Naive thymus-derived CD4-positive, alpha-beta T cell (primary cell): ENCODE measurements at regions of chr2 and their contacts with region 1.

Region 1: GRCh38 chr2:172465417-172466334 is 38.3 kb downstream of the ITGA6 start:
- DNase-seq: peak in 8 of 9 donors; percentile 58 to 83 (median 76)
- ATAC-seq: peak; percentile 65
- H3K4me3 ChIP-seq: peak overlapping the region; percentile 68
- H3K4me3 Mint-ChIP-seq: peak overlapping the region; percentile 21 to 93 (median 84)
- H3K27ac ChIP-seq: peak overlapping the region; percentile 69
- H3K27ac Mint-ChIP-seq: peak overlapping the region; percentile 34 to 98 (median 91)
- H3K4me1 ChIP-seq: peaks cover 50 to 54% of the 10 kb centered on the region in 2 donors
- H3K4me1 Mint-ChIP-seq: peaks cover 54 to 97% (median 84%) of the 10 kb centered on the region in 7 donors
- H3K27me3 ChIP-seq: no peaks in the 10 kb centered on the region
- H3K27me3 Mint-ChIP-seq: peaks cover 0 to 2% (median 0%) of the 10 kb centered on the region in 5 donors

Region 2: DNA sequence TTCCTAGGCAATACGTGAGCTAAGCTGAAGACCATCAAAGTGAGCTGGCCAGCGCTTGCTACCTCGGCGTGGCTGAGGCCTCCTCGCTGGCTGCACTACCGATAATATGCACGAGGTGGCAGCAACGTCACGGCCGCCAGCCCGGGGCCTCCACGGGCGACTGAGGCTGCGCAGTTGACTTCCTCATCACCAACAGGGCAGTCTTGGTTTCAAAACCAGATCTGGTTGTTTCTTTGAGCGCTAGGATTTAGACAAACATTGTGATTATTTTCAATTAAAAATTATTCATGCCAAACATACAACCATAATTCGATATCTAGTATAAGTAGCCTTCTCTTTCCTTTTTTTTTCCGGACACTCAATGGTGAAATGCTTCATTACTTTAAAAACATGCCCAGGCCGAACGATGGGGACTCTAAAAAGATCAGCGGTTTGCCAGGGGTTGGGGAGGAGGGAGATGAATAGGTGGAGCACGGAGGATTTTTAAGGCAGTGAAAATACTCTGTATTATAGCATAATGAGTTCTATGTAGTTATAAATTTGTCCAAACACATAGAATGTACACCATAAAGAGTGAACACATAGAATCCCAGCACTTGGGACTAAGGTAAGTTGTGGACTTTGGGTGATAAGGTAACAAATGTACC is 891.4 kb before region 1 on chr2:
- CTCF ChIA-PET with region 1: no interaction called
- POLR2A ChIA-PET with region 1: no interaction called
- intact Hi-C with region 1: loop called (anchors 1 to 5 kb)
- DNase-seq: peak; percentile 50 to 84 (median 73)
- ATAC-seq: peak; percentile 99
- H3K4me3 ChIP-seq: no peak overlapping the region
- H3K4me3 Mint-ChIP-seq: peak overlapping the region in 6 of 10 donors; percentile 13 to 69 (median 16)
- H3K27ac ChIP-seq: no peak overlapping the region
- H3K27ac Mint-ChIP-seq: peak overlapping the region in 2 of 9 donors; percentile 31 to 60
- H3K4me1 ChIP-seq: peaks cover 0 to 3% of the 10 kb centered on the region in 2 donors
- H3K4me1 Mint-ChIP-seq: peaks cover 0 to 7% (median 6%) of the 10 kb centered on the region in 7 donors
- H3K27me3 ChIP-seq: no peaks in the 10 kb centered on the region
- H3K27me3 Mint-ChIP-seq: peaks cover 0 to 8% (median 0%) of the 10 kb centered on the region in 5 donors

Region 3: GRCh38 chr2:171922230-171923022 is 543.2 kb before region 1 on chr2 and contains the start of gene HAT1:
- CTCF ChIA-PET with region 1: no interaction called
- POLR2A ChIA-PET with region 1: interaction called, 4 read pairs
- intact Hi-C with region 1: loop called in 1 of 2 experiments (anchors 1 kb)
- DNase-seq: peak; percentile 92 to 98 (median 97)
- ATAC-seq: peak; percentile 99
- H3K4me3 ChIP-seq: peak within 1 kb of the TSS; percentile 75
- H3K4me3 Mint-ChIP-seq: peak within 1 kb of the TSS; percentile 90 to 100 (median 99)
- H3K27ac ChIP-seq: peak within 1 kb of the TSS; percentile 93
- H3K27ac Mint-ChIP-seq: peak within 1 kb of the TSS; percentile 96 to 100 (median 99)
- H3K4me1 ChIP-seq: peaks cover 13 to 17% of the 10 kb centered on the region in 2 donors
- H3K4me1 Mint-ChIP-seq: peaks cover 20 to 50% (median 42%) of the 10 kb centered on the region in 7 donors
- H3K27me3 ChIP-seq: no peaks in the 10 kb centered on the region
- H3K27me3 Mint-ChIP-seq: no peaks in the 10 kb centered on the region
- total RNA-seq, gene HAT1: 22.1 to 55.4 (median 26.4) TPM

Region 4: GRCh38 chr2:172131713-172132555 is 333.7 kb before region 1 on chr2:
- CTCF ChIA-PET with region 1: no interaction called
- POLR2A ChIA-PET with region 1: interaction called, 4 read pairs
- intact Hi-C with region 1: loop called in 1 of 2 experiments (anchors 2 kb)
- DNase-seq: no peak
- ATAC-seq: no peak
- H3K4me3 ChIP-seq: no peak overlapping the region
- H3K4me3 Mint-ChIP-seq: no peak overlapping the region
- H3K27ac ChIP-seq: no peak overlapping the region
- H3K27ac Mint-ChIP-seq: no peak overlapping the region
- H3K4me1 ChIP-seq: no peaks in the 10 kb centered on the region
- H3K4me1 Mint-ChIP-seq: no peaks in the 10 kb centered on the region
- H3K27me3 ChIP-seq: no peaks in the 10 kb centered on the region
- H3K27me3 Mint-ChIP-seq: peaks cover 0 to 34% (median 7%) of the 10 kb centered on the region in 5 donors

Region 5: DNA sequence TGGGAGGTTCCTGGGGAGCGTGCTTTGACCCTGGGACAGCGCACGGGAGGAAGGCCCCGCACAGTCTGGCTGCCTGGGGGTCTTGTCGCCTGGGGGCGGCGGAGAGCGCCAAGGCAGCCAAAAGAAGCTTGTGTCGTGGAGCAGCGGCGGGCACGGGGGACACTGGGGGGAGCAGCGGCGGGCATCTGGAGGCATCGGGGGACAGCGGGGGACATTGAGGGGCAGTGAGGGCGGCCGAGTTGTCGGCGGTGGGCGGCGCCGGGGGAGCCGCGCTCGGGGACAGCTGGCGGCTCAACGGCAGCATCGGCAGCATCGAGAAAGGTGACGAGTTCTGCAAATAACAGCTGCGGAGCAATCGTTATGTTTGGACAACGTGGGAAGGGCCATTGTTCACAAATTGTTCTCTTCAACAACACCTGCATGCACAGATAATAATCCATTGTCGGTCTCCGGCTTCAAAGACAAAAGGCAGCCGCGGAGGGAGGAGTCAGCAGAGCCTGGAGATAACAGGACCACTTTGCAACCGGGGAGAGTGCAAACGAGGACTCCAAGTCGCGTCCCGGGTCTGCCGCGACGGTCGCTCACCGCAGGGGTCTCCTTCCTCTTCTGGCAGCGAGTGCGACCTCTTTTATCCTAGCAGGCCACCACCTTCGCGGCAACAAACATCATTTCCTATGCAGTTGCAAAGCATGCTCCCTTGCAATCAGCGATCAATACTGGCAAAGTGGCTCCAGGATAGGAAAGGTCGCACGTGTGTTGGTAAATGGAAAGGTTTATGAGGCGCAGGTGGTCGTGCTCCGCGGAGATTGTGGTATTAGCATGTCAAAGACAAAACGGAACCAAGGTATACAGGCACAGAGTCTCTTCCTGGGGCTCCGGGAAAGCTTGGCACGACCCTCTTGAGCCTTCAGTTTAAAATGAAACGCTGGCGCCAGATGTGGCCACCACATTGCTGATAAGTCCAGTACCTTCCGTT is 230.7 kb before region 1 on chr2:
- CTCF ChIA-PET with region 1: interaction called, 3 read pairs
- POLR2A ChIA-PET with region 1: interaction called, 3 read pairs
- intact Hi-C with region 1: loop called in 1 of 2 experiments (anchors 1 kb)
- DNase-seq: peak in 7 of 9 donors; percentile 18 to 51 (median 38)
- ATAC-seq: peak; percentile 68
- H3K4me3 ChIP-seq: peak overlapping the region; percentile 71
- H3K4me3 Mint-ChIP-seq: peak overlapping the region; percentile 82 to 97 (median 92)
- H3K27ac ChIP-seq: no peak overlapping the region
- H3K27ac Mint-ChIP-seq: peak overlapping the region in 6 of 9 donors; percentile 11 to 88 (median 60)
- H3K4me1 ChIP-seq: peaks cover 0 to 15% of the 10 kb centered on the region in 2 donors
- H3K4me1 Mint-ChIP-seq: peaks cover 14 to 25% (median 20%) of the 10 kb centered on the region in 7 donors
- H3K27me3 ChIP-seq: peaks cover 4 to 13% of the 10 kb centered on the region in 2 donors
- H3K27me3 Mint-ChIP-seq: peaks cover 4 to 72% (median 21%) of the 10 kb centered on the region in 5 donors

Region 6: DNA sequence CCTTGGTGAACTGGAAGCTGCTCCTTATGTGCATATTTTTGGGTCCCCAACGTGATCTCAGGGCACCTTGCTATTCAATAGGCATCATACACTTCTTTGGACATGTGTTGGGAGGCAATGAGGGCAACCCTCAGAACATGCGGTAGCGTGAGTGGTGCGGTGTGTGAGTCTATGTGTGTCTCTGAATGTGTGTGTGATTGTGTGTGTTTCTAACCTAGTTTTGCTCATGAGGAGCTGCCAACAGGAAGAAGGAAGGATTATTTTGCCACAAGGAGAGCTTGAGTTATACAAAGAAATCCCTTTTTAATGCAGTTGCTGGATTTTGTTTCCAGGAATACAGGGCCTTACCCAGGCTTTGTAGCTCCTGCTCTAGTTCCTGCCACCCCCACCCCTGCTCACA is 114.1 kb before region 1 on chr2:
- CTCF ChIA-PET with region 1: no interaction called
- POLR2A ChIA-PET with region 1: no interaction called
- intact Hi-C with region 1: no loop called
- DNase-seq: no peak
- ATAC-seq: no peak
- H3K4me3 ChIP-seq: no peak overlapping the region
- H3K4me3 Mint-ChIP-seq: no peak overlapping the region
- H3K27ac ChIP-seq: no peak overlapping the region
- H3K27ac Mint-ChIP-seq: peak overlapping the region in 1 of 9 donors; percentile 32
- H3K4me1 ChIP-seq: no peaks in the 10 kb centered on the region
- H3K4me1 Mint-ChIP-seq: peaks cover 0 to 1% (median 0%) of the 10 kb centered on the region in 7 donors
- H3K27me3 ChIP-seq: no peaks in the 10 kb centered on the region
- H3K27me3 Mint-ChIP-seq: peaks cover 0 to 14% (median 0%) of the 10 kb centered on the region in 5 donors

Region 7: GRCh38 chr2:172449911-172450550 is 15.6 kb before region 1 on chr2:
- CTCF ChIA-PET with region 1: interaction called, 673 read pairs
- POLR2A ChIA-PET with region 1: interaction called, 862 read pairs
- intact Hi-C with region 1: loop called in 1 of 2 experiments (anchors 1 kb)
- DNase-seq: peak in 1 of 9 donors; percentile 32
- ATAC-seq: peak; percentile 77
- H3K4me3 ChIP-seq: no peak overlapping the region
- H3K4me3 Mint-ChIP-seq: peak overlapping the region in 9 of 10 donors; percentile 57 to 82 (median 69)
- H3K27ac ChIP-seq: peak overlapping the region; percentile 10
- H3K27ac Mint-ChIP-seq: peak overlapping the region in 8 of 9 donors; percentile 5 to 90 (median 77)
- H3K4me1 ChIP-seq: peaks cover 6 to 75% of the 10 kb centered on the region in 2 donors
- H3K4me1 Mint-ChIP-seq: peaks cover 27 to 90% (median 83%) of the 10 kb centered on the region in 7 donors
- H3K27me3 ChIP-seq: no peaks in the 10 kb centered on the region
- H3K27me3 Mint-ChIP-seq: peaks cover 0 to 20% (median 0%) of the 10 kb centered on the region in 5 donors